AG04449 (cell line): ENCODE measurements at regions of chr3 and their contacts with region 1.

Region 1: GRCh38 chr3:187738331-187739093 is 6.8 kb downstream of the BCL6 start:
- DNase-seq: no peak
- H3K4me3 ChIP-seq: peak overlapping the region; percentile 94
- CTCF ChIP-seq: peak; percentile 76

Region 2: GRCh38 chr3:188211476-188211875 is 473.0 kb after region 1 on chr3:
- CTCF ChIA-PET with region 1: interaction called, 15 read pairs
- POLR2A ChIA-PET with region 1: no interaction called
- DNase-seq: no peak
- H3K4me3 ChIP-seq: no peak overlapping the region
- CTCF ChIP-seq: no peak

Region 3: GRCh38 chr3:188286087-188286513 is 547.6 kb after region 1 on chr3:
- CTCF ChIA-PET with region 1: interaction called, 24 read pairs
- POLR2A ChIA-PET with region 1: no interaction called
- DNase-seq: peak; percentile 99
- H3K4me3 ChIP-seq: no peak overlapping the region
- CTCF ChIP-seq: no peak

Region 4: GRCh38 chr3:188339410-188340295 is 601.1 kb after region 1 on chr3:
- CTCF ChIA-PET with region 1: interaction called, 16 read pairs
- POLR2A ChIA-PET with region 1: no interaction called
- DNase-seq: no peak
- H3K4me3 ChIP-seq: no peak overlapping the region
- CTCF ChIP-seq: no peak

Region 5: DNA sequence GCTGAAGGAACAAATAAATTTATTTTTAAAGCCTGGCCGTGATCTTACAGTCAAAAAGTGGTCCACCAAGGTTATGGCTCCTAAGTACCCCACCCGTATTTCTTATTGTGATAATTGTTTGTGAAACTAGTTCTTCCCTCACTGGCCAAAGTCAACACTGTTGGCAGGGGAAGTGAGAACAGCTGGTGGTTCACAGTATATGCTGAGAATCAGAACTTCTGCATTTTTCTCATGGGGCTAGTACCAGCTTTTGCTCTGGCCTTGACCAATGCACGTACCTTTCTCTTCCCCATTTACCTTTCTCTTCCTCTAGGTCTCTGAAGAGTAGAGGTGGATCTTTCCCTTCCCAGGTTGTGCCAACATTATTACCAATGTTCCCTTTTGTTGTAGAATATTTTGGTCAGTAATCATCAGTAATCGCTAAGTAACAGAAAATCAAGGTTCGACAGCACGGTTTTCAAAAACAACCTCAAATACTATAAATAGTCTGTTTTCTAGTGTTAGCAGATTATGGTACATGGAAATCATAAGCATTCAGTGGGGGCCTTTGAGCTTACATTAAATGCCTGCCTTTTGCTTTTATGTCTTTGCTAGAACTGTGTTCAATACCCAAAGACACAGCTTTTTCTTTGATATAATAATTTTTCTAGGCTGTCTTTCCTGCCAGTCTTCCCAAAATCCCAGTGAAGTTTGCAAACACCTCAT is 683.5 kb after region 1 on chr3:
- CTCF ChIA-PET with region 1: interaction called, 17 read pairs
- POLR2A ChIA-PET with region 1: interaction called, 3 read pairs
- DNase-seq: no peak
- H3K4me3 ChIP-seq: no peak overlapping the region
- CTCF ChIP-seq: no peak

Region 6: GRCh38 chr3:188792793-188793192 is 1054.3 kb after region 1 on chr3:
- CTCF ChIA-PET with region 1: interaction called, 12 read pairs
- POLR2A ChIA-PET with region 1: no interaction called
- DNase-seq: no peak
- H3K4me3 ChIP-seq: no peak overlapping the region
- CTCF ChIP-seq: peak; percentile 61